PC-3 (cell line): ENCODE measurements at regions of chr5 and their contacts with region 1.

Region 1: GRCh38 chr5:39640552-39640951 is 215.8 kb upstream of the DAB2 start:
- DNase-seq: no peak
- ATAC-seq: no peak
- H3K4me3 ChIP-seq: no peak overlapping the region
- H3K27ac ChIP-seq: peak overlapping the region; percentile 93
- H3K4me1 ChIP-seq: peaks cover 41% of the 10 kb centered on the region
- H3K27me3 ChIP-seq: no peaks in the 10 kb centered on the region
- CTCF ChIP-seq: no peak

Region 2: DNA sequence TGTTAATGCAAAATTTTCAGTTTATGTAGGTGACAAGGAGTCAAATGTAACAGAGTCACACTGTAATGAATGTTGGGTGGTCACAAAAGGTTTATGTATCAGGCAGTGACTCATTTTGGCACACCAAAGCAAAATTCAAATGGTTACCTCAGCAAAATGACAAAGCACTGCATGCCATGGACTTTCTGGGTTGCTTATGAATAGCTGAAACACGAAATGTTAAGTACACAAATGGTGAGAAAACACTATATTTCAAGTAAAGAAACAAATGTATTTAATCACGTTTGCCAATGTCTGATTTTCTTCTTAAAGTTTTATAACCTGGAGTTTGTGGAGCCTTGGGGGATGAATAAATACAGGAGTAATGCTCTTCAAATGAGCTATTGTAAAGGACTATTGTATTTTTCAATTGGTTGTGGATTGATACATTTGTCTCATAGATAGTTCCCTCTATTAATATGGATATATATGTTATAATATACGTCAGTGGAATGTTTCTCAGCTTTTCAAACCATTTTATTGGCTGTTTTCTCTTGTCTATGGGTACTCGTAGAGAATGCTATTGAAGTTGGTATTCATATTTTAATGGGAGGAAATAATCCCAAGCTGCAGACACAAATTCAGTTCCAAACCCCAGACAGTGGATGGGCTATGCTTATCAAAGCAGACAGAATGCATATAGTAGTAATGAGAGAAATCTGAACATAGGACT is 34.1 kb before region 1 on chr5:
- CTCF ChIA-PET with region 1: no interaction called
- POLR2A ChIA-PET with region 1: no interaction called
- intact Hi-C with region 1: loop called (anchors 1 kb)
- DNase-seq: peak; percentile 92
- ATAC-seq: peak; percentile 92
- H3K4me3 ChIP-seq: no peak overlapping the region
- H3K27ac ChIP-seq: peak overlapping the region; percentile 71
- H3K4me1 ChIP-seq: peaks cover 24% of the 10 kb centered on the region
- H3K27me3 ChIP-seq: no peaks in the 10 kb centered on the region
- CTCF ChIP-seq: no peak

Region 3: DNA sequence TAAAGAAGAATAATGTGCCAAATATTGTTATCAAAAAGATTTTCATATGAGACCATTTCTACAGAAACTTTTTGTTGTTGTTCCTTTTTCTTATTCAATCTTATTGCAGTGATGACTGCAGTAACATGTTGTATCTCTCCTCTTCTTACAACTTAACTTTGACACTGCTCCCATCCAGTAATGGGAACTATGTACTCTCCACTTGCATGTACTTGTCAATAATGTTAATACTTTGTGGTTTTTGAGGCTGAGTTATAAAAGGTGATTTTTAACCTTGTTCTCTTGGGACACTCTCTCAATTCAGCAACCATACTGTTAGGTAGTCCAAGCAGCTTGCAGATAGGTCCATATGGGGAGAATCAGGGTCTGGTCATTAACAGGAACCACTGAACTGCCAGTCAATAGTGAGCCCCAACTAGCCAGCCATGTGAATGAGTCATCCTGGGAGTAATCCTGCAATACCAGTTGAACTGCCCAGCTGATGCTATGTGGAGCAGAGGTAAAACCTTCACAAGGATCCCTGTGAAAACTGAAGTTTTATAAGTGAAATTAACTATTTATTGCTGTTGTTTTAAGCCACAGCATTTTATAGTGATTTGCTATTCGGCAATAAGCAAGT is 16.2 kb before region 1 on chr5:
- CTCF ChIA-PET with region 1: no interaction called
- POLR2A ChIA-PET with region 1: no interaction called
- intact Hi-C with region 1: loop called (anchors 1 kb)
- DNase-seq: peak; percentile 97
- ATAC-seq: peak; percentile 98
- H3K4me3 ChIP-seq: peak overlapping the region; percentile 54
- H3K27ac ChIP-seq: peak overlapping the region; percentile 87
- H3K4me1 ChIP-seq: peaks cover 27% of the 10 kb centered on the region
- H3K27me3 ChIP-seq: no peaks in the 10 kb centered on the region
- CTCF ChIP-seq: no peak

Region 4: GRCh38 chr5:39755986-39756385 is 115.4 kb after region 1 on chr5:
- CTCF ChIA-PET with region 1: no interaction called
- POLR2A ChIA-PET with region 1: no interaction called
- intact Hi-C with region 1: no loop called
- DNase-seq: peak; percentile 95
- ATAC-seq: peak; percentile 86
- H3K4me3 ChIP-seq: no peak overlapping the region
- H3K27ac ChIP-seq: peak overlapping the region; percentile 59
- H3K4me1 ChIP-seq: peaks cover 17% of the 10 kb centered on the region
- H3K27me3 ChIP-seq: no peaks in the 10 kb centered on the region
- CTCF ChIP-seq: no peak